ENCODE measurements at regions of chr1 and their contacts with region 1.

Region 1: DNA sequence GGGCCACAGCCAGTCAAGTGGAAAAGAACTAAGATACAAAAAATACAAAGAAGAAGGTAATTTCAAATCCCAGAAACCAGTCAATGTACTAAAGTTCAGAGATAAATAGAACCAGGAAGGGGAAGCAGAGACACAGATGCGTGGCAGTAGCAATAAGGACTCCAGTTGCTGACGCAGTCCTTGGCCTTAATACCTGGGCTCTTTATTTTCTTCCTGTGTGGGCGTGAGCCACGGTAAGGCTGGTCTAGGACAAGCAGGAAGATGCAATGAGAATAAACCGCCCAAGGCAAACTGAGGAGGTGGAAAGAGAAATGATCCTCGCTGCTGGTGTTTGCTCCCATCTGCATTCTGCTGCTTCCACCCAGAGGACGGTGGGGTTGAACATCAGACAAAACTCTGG is 65.6 kb upstream of the PLXNA2 start:
- DNase-seq: peak; percentile 14
- H3K4me3 ChIP-seq: no peak overlapping the region
- H3K27ac ChIP-seq: no peak overlapping the region
- H3K4me1 ChIP-seq: no peaks in the 10 kb centered on the region
- H3K27me3 ChIP-seq: no peaks in the 10 kb centered on the region
- CTCF ChIP-seq: no peak
- EP300 ChIP-seq: no peak
- POLR2A ChIP-seq: no peak

Region 2: GRCh38 chr1:208047476-208047934 is 262.3 kb before region 1 on chr1:
- in situ Hi-C with region 1: no loop called
- intact Hi-C with region 1: no loop called
- DNase-seq: peak; percentile 61
- H3K4me3 ChIP-seq: no peak overlapping the region
- H3K27ac ChIP-seq: peak overlapping the region; percentile 64 to 70 (median 68)
- H3K4me1 ChIP-seq: peaks cover 0 to 33% (median 7%) of the 10 kb centered on the region in 4 donors
- H3K27me3 ChIP-seq: no peaks in the 10 kb centered on the region
- CTCF ChIP-seq: no peak
- EP300 ChIP-seq: no peak
- POLR2A ChIP-seq: no peak

Region 3: GRCh38 chr1:208115924-208116640 is 193.7 kb before region 1 on chr1:
- in situ Hi-C with region 1: no loop called
- intact Hi-C with region 1: no loop called
- DNase-seq: no peak
- H3K4me3 ChIP-seq: no peak overlapping the region
- H3K27ac ChIP-seq: no peak overlapping the region
- H3K4me1 ChIP-seq: peaks cover 0 to 16% (median 6%) of the 10 kb centered on the region in 4 donors
- H3K27me3 ChIP-seq: no peaks in the 10 kb centered on the region
- CTCF ChIP-seq: no peak
- EP300 ChIP-seq: no peak
- POLR2A ChIP-seq: no peak

Region 4: DNA sequence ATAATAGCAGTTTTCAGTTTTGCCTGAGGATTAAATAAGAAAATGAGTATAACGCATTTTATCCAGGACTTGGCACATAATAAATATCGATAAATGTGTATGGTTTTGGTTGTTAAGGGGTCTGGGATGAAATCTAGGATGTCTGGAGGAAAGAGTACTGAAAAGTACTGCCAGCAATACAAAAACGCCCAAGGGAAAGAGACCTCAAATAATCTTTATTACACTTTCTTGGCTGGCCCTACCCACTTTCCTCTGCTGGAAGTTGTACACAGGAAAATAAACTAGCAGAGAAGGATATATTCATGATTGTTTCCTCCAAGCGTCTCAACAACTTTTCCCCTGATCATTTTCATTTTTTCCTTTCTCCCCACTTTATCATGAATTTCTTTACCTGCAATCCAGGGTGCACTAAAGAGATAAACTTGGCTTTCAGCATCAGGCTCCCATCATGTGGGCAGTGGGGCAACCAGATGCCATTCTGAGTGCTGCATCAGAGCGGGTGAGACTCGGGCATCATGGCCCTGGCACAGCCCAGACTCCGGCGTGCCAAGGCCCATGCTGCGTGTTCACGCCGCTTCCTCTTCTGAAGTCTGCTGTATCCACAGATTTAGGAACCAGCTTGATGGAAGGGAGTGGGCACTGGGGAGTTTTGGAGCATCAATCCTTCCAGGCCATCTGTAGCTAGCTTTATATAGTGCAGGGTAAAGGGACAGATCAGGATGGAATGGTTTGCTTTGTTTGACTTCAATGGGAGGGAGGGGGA is 29.8 kb before region 1 on chr1:
- in situ Hi-C with region 1: no loop called
- intact Hi-C with region 1: loop called (anchors 1 kb)
- DNase-seq: no peak
- H3K4me3 ChIP-seq: no peak overlapping the region
- H3K27ac ChIP-seq: no peak overlapping the region
- H3K4me1 ChIP-seq: no peaks in the 10 kb centered on the region
- H3K27me3 ChIP-seq: peaks cover 11% of the 10 kb centered on the region
- CTCF ChIP-seq: no peak
- EP300 ChIP-seq: no peak
- POLR2A ChIP-seq: no peak

Measured in transverse colon (tissue), 4 donors.